Activated B cell treated with CpG ODN at 0.5 μM for 24 hours (primary cell): ENCODE measurements at regions of chr11 and their contacts with region 1.

Region 1: DNA sequence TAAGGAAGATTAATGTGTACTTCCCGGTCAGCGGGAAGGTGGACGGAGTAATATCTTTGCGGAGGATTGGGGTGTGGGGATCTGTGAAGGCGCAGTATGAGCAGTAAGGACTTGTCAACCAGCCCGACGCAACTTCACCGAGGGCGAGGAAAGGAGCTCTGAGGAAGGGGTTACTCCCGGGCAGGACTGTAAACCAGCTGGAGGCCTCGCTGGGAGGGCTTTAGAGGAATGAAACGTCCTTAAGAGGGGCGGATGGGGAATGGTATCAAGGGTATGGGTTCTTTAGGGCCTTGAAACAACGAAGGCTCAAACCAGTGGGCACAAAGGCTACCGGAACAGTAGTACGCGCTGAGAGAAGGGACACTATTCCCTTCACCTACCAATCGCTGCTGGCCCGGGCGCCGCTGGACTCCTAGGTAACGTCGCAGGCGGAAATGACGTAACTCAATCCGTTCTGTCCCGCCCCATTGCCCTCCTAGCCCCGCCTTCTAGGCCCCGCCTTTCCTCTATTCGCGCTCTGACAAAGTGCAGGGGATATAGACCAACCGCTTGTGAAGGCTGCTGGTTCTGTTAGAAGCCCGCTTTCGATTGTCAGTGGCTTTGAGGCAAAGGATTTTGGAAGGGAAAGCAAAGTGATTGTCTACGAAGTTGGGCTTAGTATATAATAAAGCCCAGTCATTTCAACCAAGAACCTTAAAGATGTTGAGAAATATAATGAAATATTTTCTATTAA is at the start of gene C11orf65:
- DNase-seq: peak; percentile 90
- ATAC-seq: peak; percentile 97
- H3K4me3 Mint-ChIP-seq: peak within 1 kb of the TSS; percentile 98
- H3K27ac Mint-ChIP-seq: peak within 1 kb of the TSS; percentile 99
- H3K4me1 Mint-ChIP-seq: peaks cover 18% of the 10 kb centered on the region
- H3K27me3 Mint-ChIP-seq: no peaks in the 10 kb centered on the region
- CTCF ChIP-seq: no peak
- total RNA-seq, gene C11orf65: 0.69 and 1.7 TPM in 2 replicates

Region 2: GRCh38 chr11:107928046-107928766 is 539.1 kb before region 1 on chr11 and contains the start of gene RAB39A:
- CTCF ChIA-PET with region 1: no interaction called
- POLR2A ChIA-PET with region 1: no interaction called
- intact Hi-C with region 1: loop called (anchors 1 kb)
- DNase-seq: peak; percentile 82
- ATAC-seq: peak; percentile 87
- H3K4me3 Mint-ChIP-seq: peak within 1 kb of the TSS; percentile 91
- H3K27ac Mint-ChIP-seq: peak within 1 kb of the TSS; percentile 80
- H3K4me1 Mint-ChIP-seq: peaks cover 37% of the 10 kb centered on the region
- H3K27me3 Mint-ChIP-seq: peaks cover 4% of the 10 kb centered on the region
- CTCF ChIP-seq: no peak
- total RNA-seq, gene RAB39A: 3.6 and 4.1 TPM in 2 replicates

Region 3: GRCh38 chr11:108121274-108122155 is 345.7 kb before region 1 on chr11 and contains the start of gene ACAT1:
- CTCF ChIA-PET with region 1: no interaction called
- POLR2A ChIA-PET with region 1: no interaction called
- intact Hi-C with region 1: loop called (anchors 1 kb)
- DNase-seq: peak; percentile 96
- ATAC-seq: peak; percentile 99
- H3K4me3 Mint-ChIP-seq: peak within 1 kb of the TSS; percentile 87
- H3K27ac Mint-ChIP-seq: peak within 1 kb of the TSS; percentile 56
- H3K4me1 Mint-ChIP-seq: peaks cover 39% of the 10 kb centered on the region
- H3K27me3 Mint-ChIP-seq: no peaks in the 10 kb centered on the region
- CTCF ChIP-seq: no peak
- total RNA-seq, gene ACAT1: 50.1 and 51.1 TPM in 2 replicates

Region 4: DNA sequence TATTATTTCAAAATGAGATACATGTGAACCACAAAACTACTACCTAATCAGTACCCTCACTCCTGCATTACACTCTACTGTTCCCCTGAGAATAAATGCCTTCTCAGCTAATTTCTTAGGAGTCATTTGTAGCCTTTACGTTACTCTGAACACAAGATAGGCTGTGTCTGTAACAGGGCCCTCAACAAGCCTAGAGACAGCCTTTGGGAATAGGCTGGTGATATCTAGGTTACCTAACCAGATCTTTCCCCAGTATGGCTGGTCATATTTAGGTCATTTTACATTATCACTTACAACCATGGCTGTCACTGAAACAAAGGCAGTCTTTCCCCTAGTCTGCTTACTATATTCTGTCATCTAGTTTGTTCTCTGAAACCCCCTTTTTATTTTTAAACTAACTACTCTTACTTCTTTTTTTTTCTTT is 230.2 kb before region 1 on chr11:
- CTCF ChIA-PET with region 1: no interaction called
- POLR2A ChIA-PET with region 1: no interaction called
- intact Hi-C with region 1: loop called (anchors 5 kb)
- DNase-seq: no peak
- ATAC-seq: peak; percentile 68
- H3K4me3 Mint-ChIP-seq: peak overlapping the region; percentile 67
- H3K27ac Mint-ChIP-seq: peak overlapping the region; percentile 91
- H3K4me1 Mint-ChIP-seq: peaks cover 53% of the 10 kb centered on the region
- H3K27me3 Mint-ChIP-seq: no peaks in the 10 kb centered on the region
- CTCF ChIP-seq: no peak

Region 5: DNA sequence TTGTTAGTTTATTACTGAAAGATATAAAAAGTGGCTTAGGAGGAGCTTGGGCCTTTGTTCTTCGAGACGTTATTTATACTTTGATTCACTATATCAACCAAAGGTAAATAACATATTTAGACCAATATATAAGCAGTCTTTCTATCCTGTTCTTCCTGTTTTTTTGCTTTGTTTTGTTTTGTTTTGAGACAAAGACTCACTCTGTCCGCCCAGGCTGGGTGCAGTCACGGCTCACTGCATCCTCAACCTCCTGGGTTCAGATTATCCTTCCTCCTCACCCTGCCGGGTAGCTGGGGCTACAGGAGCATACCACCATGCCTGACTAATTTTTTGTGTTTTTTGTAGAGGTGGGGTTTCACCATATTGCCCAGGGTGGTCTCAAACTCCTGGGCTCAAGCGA is 177.6 kb before region 1 on chr11:
- CTCF ChIA-PET with region 1: no interaction called
- POLR2A ChIA-PET with region 1: no interaction called
- intact Hi-C with region 1: no loop called
- DNase-seq: no peak
- ATAC-seq: peak; percentile 79
- H3K4me3 Mint-ChIP-seq: no peak overlapping the region
- H3K27ac Mint-ChIP-seq: peak overlapping the region; percentile 82
- H3K4me1 Mint-ChIP-seq: peaks cover 9% of the 10 kb centered on the region
- H3K27me3 Mint-ChIP-seq: no peaks in the 10 kb centered on the region
- CTCF ChIP-seq: no peak

Region 6: GRCh38 chr11:108483163-108483562 is 15.9 kb after region 1 on chr11:
- CTCF ChIA-PET with region 1: no interaction called
- POLR2A ChIA-PET with region 1: no interaction called
- intact Hi-C with region 1: no loop called
- DNase-seq: no peak
- ATAC-seq: no peak
- H3K4me3 Mint-ChIP-seq: no peak overlapping the region
- H3K27ac Mint-ChIP-seq: no peak overlapping the region
- H3K4me1 Mint-ChIP-seq: no peaks in the 10 kb centered on the region
- H3K27me3 Mint-ChIP-seq: no peaks in the 10 kb centered on the region
- CTCF ChIP-seq: no peak

Region 7: GRCh38 chr11:108593214-108593922 is 126.1 kb after region 1 on chr11 and contains the start of gene EXPH5:
- CTCF ChIA-PET with region 1: no interaction called
- POLR2A ChIA-PET with region 1: no interaction called
- intact Hi-C with region 1: loop called (anchors 1 kb)
- DNase-seq: peak; percentile 47
- ATAC-seq: peak; percentile 96
- H3K4me3 Mint-ChIP-seq: peak within 1 kb of the TSS; percentile 93
- H3K27ac Mint-ChIP-seq: peak within 1 kb of the TSS; percentile 55
- H3K4me1 Mint-ChIP-seq: peaks cover 14% of the 10 kb centered on the region
- H3K27me3 Mint-ChIP-seq: peaks cover 42% of the 10 kb centered on the region
- CTCF ChIP-seq: no peak
- total RNA-seq, gene EXPH5: 0.27 and 0.29 TPM in 2 replicates